H1 (cell line): ENCODE measurements at regions of chr21 and their contacts with region 1.

Region 1: DNA sequence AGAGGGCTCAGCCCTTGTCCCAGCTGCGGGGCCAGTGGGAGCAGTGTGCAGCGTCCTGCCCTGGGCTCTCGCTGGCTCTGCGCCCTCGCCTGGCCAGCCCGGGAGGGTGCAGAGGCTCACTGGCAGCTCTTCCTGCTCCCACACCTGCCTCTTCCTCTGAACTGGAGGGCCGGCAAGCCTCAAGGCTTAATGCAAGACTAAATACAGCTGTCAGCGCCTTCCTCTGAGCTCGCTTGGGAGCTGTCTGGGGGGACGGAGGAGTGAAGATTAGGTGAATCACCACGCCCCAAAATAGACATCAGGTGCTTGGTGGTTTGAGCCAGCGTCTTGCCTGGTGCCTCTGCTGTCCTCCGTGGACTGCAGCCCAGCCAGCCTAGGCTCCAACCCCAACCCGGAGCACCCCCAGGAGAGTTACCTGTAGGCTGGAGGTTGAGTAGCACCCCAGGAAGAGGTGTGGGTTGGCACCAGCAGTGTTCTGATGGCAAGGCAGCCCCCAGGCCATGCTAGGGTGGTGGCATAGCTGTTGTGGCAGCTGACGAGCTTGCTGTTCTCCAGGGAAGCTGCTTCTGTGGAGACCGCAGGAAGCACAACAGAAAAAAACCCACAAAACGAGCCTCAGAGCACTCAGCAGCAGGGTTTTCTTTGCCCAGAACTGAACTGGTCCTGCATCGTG is 36.9 kb downstream of the UMODL1 start:
- DNase-seq: peak in 1 of 2 experiments; percentile 50
- H3K4me3 ChIP-seq: no peak overlapping the region
- H3K27ac ChIP-seq: no peak overlapping the region
- H3K4me1 ChIP-seq: peaks cover 0 to 7% (median 1%) of the 10 kb centered on the region in 4 experiments; a peak in 2 of 7 replicates
- H3K27me3 ChIP-seq: no peaks in the 10 kb centered on the region
- CTCF ChIP-seq: peak; percentile 89 to 93 (median 89)
- EP300 ChIP-seq: no peak
- POLR2A ChIP-seq: no peak
- RAD21 ChIP-seq: peak; percentile 67 to 81

Region 2: GRCh38 chr21:42073145-42074092 is 34.6 kb before region 1 on chr21:
- CTCF ChIA-PET with region 1: interaction called, 21 read pairs
- POLR2A ChIA-PET with region 1: no interaction called
- DNase-seq: no peak
- H3K4me3 ChIP-seq: no peak overlapping the region
- H3K27ac ChIP-seq: no peak overlapping the region
- H3K4me1 ChIP-seq: no peaks in the 10 kb centered on the region
- H3K27me3 ChIP-seq: no peaks in the 10 kb centered on the region
- CTCF ChIP-seq: no peak
- EP300 ChIP-seq: no peak
- POLR2A ChIP-seq: no peak
- RAD21 ChIP-seq: no peak; a peak in 1 of 4 replicates

Region 3: GRCh38 chr21:42097860-42098454 is 10.1 kb before region 1 on chr21:
- CTCF ChIA-PET with region 1: interaction called, 80 read pairs
- POLR2A ChIA-PET with region 1: no interaction called
- DNase-seq: no peak
- H3K4me3 ChIP-seq: no peak overlapping the region
- H3K27ac ChIP-seq: no peak overlapping the region
- H3K4me1 ChIP-seq: no peaks in the 10 kb centered on the region
- H3K27me3 ChIP-seq: no peaks in the 10 kb centered on the region
- CTCF ChIP-seq: no peak
- EP300 ChIP-seq: no peak
- POLR2A ChIP-seq: no peak
- RAD21 ChIP-seq: no peak

Region 4: DNA sequence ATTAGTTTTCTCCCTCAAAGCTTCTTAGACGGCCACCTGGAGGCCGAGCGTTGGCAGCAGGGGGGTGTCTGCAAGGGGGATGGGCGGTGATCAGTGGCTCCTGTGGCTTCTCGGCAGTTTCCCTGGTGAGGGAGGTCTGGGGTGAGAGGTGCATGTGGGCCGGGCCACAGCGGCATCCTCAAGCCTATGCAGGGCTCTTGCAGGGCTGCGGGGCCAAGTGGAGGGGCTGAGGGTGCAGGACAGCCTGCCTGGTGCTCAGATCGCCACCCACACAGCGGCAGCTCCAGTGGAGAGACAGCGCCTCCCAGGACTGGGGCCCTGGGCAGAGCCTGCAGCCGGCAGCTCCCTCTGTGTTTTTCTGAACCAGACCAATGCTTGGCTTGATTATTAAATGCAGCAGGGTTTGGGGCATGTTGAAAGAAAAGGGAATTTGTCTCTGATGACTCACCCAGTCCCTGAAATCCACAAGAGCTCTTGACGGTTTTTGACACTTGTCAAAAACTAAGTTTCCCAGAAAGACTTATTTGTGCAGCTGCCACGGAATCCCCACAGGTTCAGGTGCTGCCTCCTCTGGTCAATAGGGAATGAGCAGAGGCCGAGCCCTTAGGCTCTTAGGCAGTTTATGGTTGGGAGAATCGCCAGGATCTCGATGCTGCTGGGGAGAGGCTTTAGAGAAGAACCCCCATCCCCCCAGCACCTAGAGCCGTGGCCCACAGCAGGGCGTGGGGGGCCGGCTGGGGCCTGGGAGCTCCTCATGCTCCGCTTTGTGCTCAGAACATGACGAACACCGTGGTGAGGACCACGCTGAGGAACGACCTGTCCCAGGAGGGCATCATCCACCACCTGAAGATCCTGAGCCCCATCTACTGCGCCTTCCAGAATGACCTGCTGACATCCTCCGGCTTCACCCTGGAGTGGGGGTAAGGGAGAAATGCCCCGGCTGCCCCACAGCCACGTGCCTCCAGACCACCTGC is 17.8 kb after region 1 on chr21:
- CTCF ChIA-PET with region 1: interaction called, 22 read pairs
- POLR2A ChIA-PET with region 1: no interaction called
- DNase-seq: no peak
- H3K4me3 ChIP-seq: no peak overlapping the region
- H3K27ac ChIP-seq: no peak overlapping the region
- H3K4me1 ChIP-seq: peaks cover 0 to 6% (median 4%) of the 10 kb centered on the region in 4 experiments; a peak in 4 of 7 replicates
- H3K27me3 ChIP-seq: no peaks in the 10 kb centered on the region
- CTCF ChIP-seq: peak; percentile 35 to 54 (median 54)
- EP300 ChIP-seq: no peak
- POLR2A ChIP-seq: no peak
- RAD21 ChIP-seq: peak; percentile 12 to 32; a peak in 2 of 4 replicates

Region 5: DNA sequence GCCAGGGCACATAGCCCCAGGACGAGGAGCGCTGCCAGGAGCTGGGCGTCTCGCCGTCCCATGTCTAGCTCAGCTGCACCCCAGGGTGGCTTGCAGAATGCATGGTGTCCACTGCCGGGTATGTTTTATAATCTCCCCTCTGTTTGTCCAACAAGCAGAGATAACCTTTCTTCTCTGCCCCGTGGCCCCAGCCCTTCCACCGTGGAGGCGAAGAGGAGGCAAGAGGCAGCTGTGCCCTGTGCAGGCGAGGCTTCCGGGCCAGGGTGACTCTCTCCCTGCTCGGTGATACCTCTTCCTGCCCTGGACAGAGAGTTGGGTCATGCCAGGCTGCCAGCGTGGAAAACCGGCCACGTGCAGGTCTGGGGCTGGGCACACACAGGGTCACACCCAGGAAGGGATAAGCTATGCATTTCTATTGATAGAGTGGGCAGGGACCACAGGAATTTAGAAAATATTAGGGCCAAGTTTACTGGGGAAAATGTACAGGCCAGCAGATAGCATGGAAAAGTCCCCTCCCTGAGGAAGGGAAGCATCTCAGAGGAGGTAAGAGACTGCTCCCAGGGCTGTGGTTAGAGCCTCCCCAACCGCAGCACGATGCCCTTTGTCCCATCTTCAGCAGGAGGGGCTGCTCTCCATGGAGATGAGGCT is 243.0 kb after region 1 on chr21 and contains the start of gene TFF2:
- CTCF ChIA-PET with region 1: no interaction called
- POLR2A ChIA-PET with region 1: no interaction called
- DNase-seq: peak in 1 of 2 experiments; percentile 39
- H3K4me3 ChIP-seq: no peak within 1 kb of the TSS
- H3K27ac ChIP-seq: no peak within 1 kb of the TSS
- H3K4me1 ChIP-seq: no peaks in the 10 kb centered on the region
- H3K27me3 ChIP-seq: no peaks in the 10 kb centered on the region
- CTCF ChIP-seq: no peak
- EP300 ChIP-seq: no peak
- POLR2A ChIP-seq: no peak
- RAD21 ChIP-seq: no peak
- total RNA-seq, gene TFF2: not detected in 2 replicates